H1 (cell line): ENCODE measurements at regions of chr12 and their contacts with region 1.

Region 1: GRCh38 chr12:49515266-49515665 is 23.6 kb upstream of the KCNH3 start:
- DNase-seq: no peak
- H3K4me3 ChIP-seq: no peak overlapping the region
- H3K27ac ChIP-seq: no peak overlapping the region
- H3K4me1 ChIP-seq: no peaks in the 10 kb centered on the region
- H3K27me3 ChIP-seq: no peaks in the 10 kb centered on the region
- CTCF ChIP-seq: no peak
- EP300 ChIP-seq: no peak
- POLR2A ChIP-seq: no peak
- RAD21 ChIP-seq: no peak

Region 2: GRCh38 chr12:49331380-49332222 is 183.7 kb before region 1 on chr12:
- CTCF ChIA-PET with region 1: interaction called, 23 read pairs
- POLR2A ChIA-PET with region 1: interaction called, 3 read pairs
- DNase-seq: peak in 1 of 2 experiments; percentile 68
- H3K4me3 ChIP-seq: no peak overlapping the region
- H3K27ac ChIP-seq: no peak overlapping the region
- H3K4me1 ChIP-seq: no peaks in the 10 kb centered on the region; a peak in 2 of 7 replicates
- H3K27me3 ChIP-seq: peaks cover 33 to 50% (median 43%) of the 10 kb centered on the region in 4 experiments
- CTCF ChIP-seq: peak; percentile 86 to 89 (median 88)
- EP300 ChIP-seq: no peak
- POLR2A ChIP-seq: no peak
- RAD21 ChIP-seq: peak; percentile 86 to 93

Region 3: DNA sequence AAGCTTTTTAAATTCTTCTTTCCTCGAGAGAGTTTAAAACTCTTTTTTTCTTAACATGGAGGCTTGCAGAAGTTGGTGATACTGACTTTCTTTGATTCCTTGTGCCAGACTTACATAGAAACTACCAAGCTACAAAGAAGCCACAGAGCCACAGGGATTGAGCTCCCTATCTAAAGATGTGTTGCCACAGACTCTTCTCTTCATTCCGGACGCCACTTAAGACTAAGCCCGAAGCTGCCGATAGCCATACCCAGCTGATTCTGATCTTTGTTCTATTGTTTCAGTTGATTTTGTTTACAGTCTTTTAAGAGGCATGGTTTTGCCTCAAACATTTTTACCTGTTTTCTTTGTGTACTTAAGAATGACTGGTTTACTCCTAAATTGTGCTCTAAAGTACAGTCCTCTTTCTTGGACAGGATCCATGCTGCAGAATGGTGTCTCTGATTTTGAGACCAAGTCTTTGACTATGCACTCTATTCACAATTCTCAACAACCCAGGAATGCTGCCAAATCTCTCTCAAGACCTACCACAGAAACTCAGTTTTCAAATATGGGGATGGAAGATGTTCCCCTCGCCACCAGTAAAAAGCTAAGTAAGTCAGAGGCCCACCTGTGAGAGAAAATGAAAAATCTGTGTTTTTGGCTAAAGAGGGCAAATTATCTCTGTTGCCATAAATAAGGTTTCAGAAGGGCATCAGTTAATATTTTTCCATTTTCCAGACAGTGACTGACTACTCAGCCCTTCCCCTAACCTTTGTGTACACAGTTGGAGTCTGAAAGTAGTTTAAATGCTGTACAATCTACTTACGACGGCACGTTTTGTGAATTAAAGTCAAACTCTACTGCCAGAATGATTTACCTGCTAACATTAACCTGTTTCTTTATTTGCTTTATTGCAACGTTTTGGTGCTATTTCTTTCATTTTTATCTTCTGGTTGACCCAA is 18.6 kb before region 1 on chr12:
- CTCF ChIA-PET with region 1: interaction called, 24 read pairs
- POLR2A ChIA-PET with region 1: interaction called, 3 read pairs
- DNase-seq: no peak
- H3K4me3 ChIP-seq: no peak overlapping the region
- H3K27ac ChIP-seq: no peak overlapping the region
- H3K4me1 ChIP-seq: no peaks in the 10 kb centered on the region
- H3K27me3 ChIP-seq: no peaks in the 10 kb centered on the region
- CTCF ChIP-seq: no peak
- EP300 ChIP-seq: no peak
- POLR2A ChIP-seq: no peak
- RAD21 ChIP-seq: no peak

Region 4: DNA sequence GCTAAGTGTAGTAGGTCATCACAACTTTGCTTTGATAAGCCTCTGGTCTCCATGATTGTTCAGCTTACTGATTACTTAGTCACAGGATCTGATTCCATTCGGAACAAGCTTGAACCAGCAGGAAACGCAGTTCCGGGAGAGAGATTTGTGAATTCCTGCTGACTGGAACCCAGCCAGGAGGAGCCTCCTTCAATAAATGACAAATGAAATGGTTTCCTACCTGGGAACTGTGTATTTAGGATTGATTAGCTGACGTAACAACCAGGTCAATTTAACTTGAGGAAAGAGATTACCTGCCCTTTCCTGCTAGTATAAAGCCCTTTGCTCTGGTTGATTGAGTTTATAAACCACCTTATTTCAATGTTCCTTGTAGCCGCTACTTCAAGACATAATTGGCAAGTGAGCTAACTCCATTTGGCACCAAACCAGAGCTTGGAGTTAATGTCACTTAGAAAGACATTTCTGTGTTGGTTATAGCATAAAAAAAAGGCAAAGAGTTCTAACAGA is 11.5 kb before region 1 on chr12:
- CTCF ChIA-PET with region 1: interaction called, 29 read pairs
- POLR2A ChIA-PET with region 1: interaction called, 3 read pairs
- DNase-seq: no peak
- H3K4me3 ChIP-seq: no peak overlapping the region
- H3K27ac ChIP-seq: no peak overlapping the region
- H3K4me1 ChIP-seq: no peaks in the 10 kb centered on the region
- H3K27me3 ChIP-seq: no peaks in the 10 kb centered on the region
- CTCF ChIP-seq: no peak
- EP300 ChIP-seq: no peak
- POLR2A ChIP-seq: no peak
- RAD21 ChIP-seq: no peak

Region 5: GRCh38 chr12:49527361-49528130 is 12.3 kb after region 1 on chr12:
- CTCF ChIA-PET with region 1: interaction called, 41 read pairs
- POLR2A ChIA-PET with region 1: no interaction called
- DNase-seq: no peak
- H3K4me3 ChIP-seq: no peak overlapping the region
- H3K27ac ChIP-seq: no peak overlapping the region
- H3K4me1 ChIP-seq: peaks cover 0 to 3% (median 0%) of the 10 kb centered on the region in 4 experiments; a peak in 1 of 7 replicates
- H3K27me3 ChIP-seq: no peaks in the 10 kb centered on the region; a peak in 1 of 7 replicates
- CTCF ChIP-seq: no peak
- EP300 ChIP-seq: no peak
- POLR2A ChIP-seq: no peak
- RAD21 ChIP-seq: no peak

Region 6: DNA sequence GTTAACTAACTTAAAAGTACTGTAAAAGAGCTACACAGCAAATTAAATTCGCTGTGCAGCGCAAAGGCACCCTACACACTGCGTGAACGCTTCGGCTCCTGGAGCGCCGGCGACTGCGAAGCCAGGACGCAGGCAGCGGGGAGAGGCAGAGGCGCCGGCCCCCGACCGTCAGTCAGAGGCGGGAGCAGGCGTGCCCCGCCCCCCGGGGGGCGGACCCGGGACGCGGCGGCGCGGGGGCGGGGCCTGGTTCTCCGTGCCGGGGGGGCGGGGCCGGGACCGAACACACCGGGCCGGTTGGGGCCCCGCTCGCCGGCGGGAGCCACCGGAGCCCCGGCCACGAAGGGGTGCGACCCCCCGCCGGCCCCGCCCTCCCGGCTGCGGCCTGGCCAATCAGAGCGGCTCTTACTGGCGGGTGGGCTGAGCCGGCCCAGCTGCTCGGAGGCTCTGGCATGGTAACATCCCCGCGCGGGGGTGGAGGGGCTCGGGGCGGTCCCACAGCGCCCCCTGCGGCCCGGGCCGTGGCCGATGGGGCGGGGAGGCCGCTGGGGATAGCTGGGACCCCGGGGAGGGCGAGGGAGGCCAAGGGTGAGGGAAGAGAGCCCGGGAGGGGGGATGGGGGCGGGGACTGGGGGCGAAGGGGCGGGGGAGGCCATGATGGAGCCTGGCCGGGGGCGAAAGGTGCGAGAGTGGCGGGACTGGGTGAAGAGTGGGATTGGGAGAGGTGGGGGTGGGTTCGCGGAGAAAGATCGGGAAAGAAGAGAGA is 108.1 kb after region 1 on chr12 and contains the start of gene PRPF40B:
- CTCF ChIA-PET with region 1: no interaction called
- POLR2A ChIA-PET with region 1: no interaction called
- DNase-seq: peak; percentile 78 to 95
- H3K4me3 ChIP-seq: peak within 1 kb of the TSS; percentile 50 to 73 (median 66)
- H3K27ac ChIP-seq: peak within 1 kb of the TSS; percentile 56; the same call in 1 of the 2 replicates
- H3K4me1 ChIP-seq: peaks cover 0 to 7% (median 3%) of the 10 kb centered on the region in 4 experiments; a peak in 6 of 7 replicates
- H3K27me3 ChIP-seq: no peaks in the 10 kb centered on the region
- CTCF ChIP-seq: peak; percentile 47 to 56 (median 54)
- EP300 ChIP-seq: 0 out of 3 replicates have a peak, but pooled peaks of 1 of the 2 experiments have one; percentile 7
- POLR2A ChIP-seq: no peak; a peak in 1 of 3 replicates
- RAD21 ChIP-seq: peak; percentile 27 to 47; a peak in 3 of 4 replicates
- total RNA-seq, gene PRPF40B: 24.4 and 26.8 TPM in 2 replicates